ENCODE measurements at regions of chr14 and their contacts with region 1.

Region 1: GRCh38 chr14:73759714-73760597 is 45.8 kb upstream of the PNMA1 start:
- DNase-seq: peak; percentile 92
- H3K4me3 ChIP-seq: peak overlapping the region; percentile 67 to 72
- H3K27ac ChIP-seq: peak overlapping the region; percentile 85 to 96
- H3K4me1 ChIP-seq: peaks cover 46 to 61% of the 10 kb centered on the region in 2 experiments
- H3K27me3 ChIP-seq: no peaks in the 10 kb centered on the region
- CTCF ChIP-seq: no peak; the same call in 1 of the 2 replicates
- EP300 ChIP-seq: peak in 1 of 2 experiments; percentile 28; a peak in 1 of 4 replicates
- RAD21 ChIP-seq: no peak

Region 2: GRCh38 chr14:73568381-73568781 is 191.6 kb before region 1 on chr14:
- CTCF ChIA-PET with region 1: no interaction called
- POLR2A ChIA-PET with region 1: no interaction called
- DNase-seq: no peak
- H3K4me3 ChIP-seq: peak overlapping the region; percentile 56 to 70; a peak in 2 of 4 replicates
- H3K27ac ChIP-seq: peak overlapping the region; percentile 70 to 88; a peak in 3 of 4 replicates
- H3K4me1 ChIP-seq: peaks cover 5 to 12% of the 10 kb centered on the region in 2 experiments; a peak in 3 of 4 replicates
- H3K27me3 ChIP-seq: no peaks in the 10 kb centered on the region
- CTCF ChIP-seq: no peak
- EP300 ChIP-seq: no peak
- RAD21 ChIP-seq: no peak

Region 3: GRCh38 chr14:73728717-73729330 is 31.1 kb before region 1 on chr14:
- CTCF ChIA-PET with region 1: interaction called, 95 read pairs
- POLR2A ChIA-PET with region 1: no interaction called
- DNase-seq: peak; percentile 89
- H3K4me3 ChIP-seq: peak overlapping the region in 1 of 2 experiments; percentile 36; a peak in 1 of 4 replicates
- H3K27ac ChIP-seq: peak overlapping the region; percentile 13 to 53; a peak in 2 of 4 replicates
- H3K4me1 ChIP-seq: peaks cover under 1 to 20% of the 10 kb centered on the region in 2 experiments; a peak in 3 of 4 replicates
- H3K27me3 ChIP-seq: no peaks in the 10 kb centered on the region
- CTCF ChIP-seq: peak; percentile 85
- EP300 ChIP-seq: no peak
- RAD21 ChIP-seq: peak; percentile 95

Region 4: GRCh38 chr14:73771848-73772638 is 12.1 kb after region 1 on chr14:
- CTCF ChIA-PET with region 1: interaction called, 48 read pairs
- POLR2A ChIA-PET with region 1: interaction called, 3 read pairs
- DNase-seq: peak; percentile 79
- H3K4me3 ChIP-seq: no peak overlapping the region
- H3K27ac ChIP-seq: peak overlapping the region in 1 of 2 experiments; percentile 65; a peak in 2 of 4 replicates
- H3K4me1 ChIP-seq: peaks cover 21 to 22% of the 10 kb centered on the region in 2 experiments
- H3K27me3 ChIP-seq: no peaks in the 10 kb centered on the region
- CTCF ChIP-seq: no peak
- EP300 ChIP-seq: no peak
- RAD21 ChIP-seq: no peak

Region 5: GRCh38 chr14:73785873-73786695 is 26.1 kb after region 1 on chr14:
- CTCF ChIA-PET with region 1: interaction called, 24 read pairs
- POLR2A ChIA-PET with region 1: interaction called, 3 read pairs
- DNase-seq: peak; percentile 74
- H3K4me3 ChIP-seq: peak overlapping the region; percentile 80 to 88
- H3K27ac ChIP-seq: peak overlapping the region; percentile 72 to 87
- H3K4me1 ChIP-seq: peaks cover 20 to 31% of the 10 kb centered on the region in 2 experiments
- H3K27me3 ChIP-seq: no peaks in the 10 kb centered on the region
- CTCF ChIP-seq: no peak; the same call in 1 of the 2 replicates
- EP300 ChIP-seq: no peak
- RAD21 ChIP-seq: no peak

Region 6: DNA sequence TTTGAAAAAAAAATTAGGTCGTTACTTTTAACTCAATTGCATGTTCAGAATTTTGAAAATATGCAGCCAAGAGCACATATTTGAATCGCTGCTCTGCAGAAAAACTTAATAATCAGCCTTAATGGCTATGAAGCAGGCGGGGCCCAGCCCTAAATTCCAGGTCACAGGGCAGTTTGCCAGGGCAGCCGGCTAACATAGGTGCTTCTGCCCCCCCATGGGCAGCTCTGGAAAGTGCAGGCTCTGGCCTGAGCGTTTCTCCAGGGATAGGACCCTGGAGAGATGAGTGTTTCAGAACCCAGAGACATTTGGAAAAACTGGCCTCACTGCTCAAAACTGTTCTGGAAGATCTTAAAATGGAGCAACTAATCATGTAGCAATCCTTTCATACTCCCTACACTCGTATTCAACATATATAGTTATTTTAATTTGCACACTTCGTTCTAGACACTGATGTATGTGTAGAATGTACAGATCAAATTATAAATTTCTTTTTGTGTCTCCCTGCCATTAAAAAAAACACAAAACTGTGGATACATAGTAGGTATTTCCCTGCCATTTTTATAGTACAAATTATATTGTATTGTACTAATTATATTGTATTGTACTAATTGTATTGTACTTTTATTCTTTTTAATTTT is 65.7 kb after region 1 on chr14:
- CTCF ChIA-PET with region 1: interaction called, 25 read pairs
- POLR2A ChIA-PET with region 1: no interaction called
- DNase-seq: peak; percentile 90
- H3K4me3 ChIP-seq: peak overlapping the region in 1 of 2 experiments; percentile 27; a peak in 1 of 4 replicates
- H3K27ac ChIP-seq: no peak overlapping the region; a peak in 1 of 4 replicates
- H3K4me1 ChIP-seq: peaks cover 0 to 3% of the 10 kb centered on the region in 2 experiments; a peak in 1 of 4 replicates
- H3K27me3 ChIP-seq: no peaks in the 10 kb centered on the region
- CTCF ChIP-seq: peak; percentile 93
- EP300 ChIP-seq: no peak
- RAD21 ChIP-seq: peak; percentile 94

Region 7: GRCh38 chr14:73924337-73924736 is 164.4 kb after region 1 on chr14:
- CTCF ChIA-PET with region 1: no interaction called
- POLR2A ChIA-PET with region 1: no interaction called
- DNase-seq: no peak
- H3K4me3 ChIP-seq: no peak overlapping the region
- H3K27ac ChIP-seq: no peak overlapping the region
- H3K4me1 ChIP-seq: no peaks in the 10 kb centered on the region
- H3K27me3 ChIP-seq: no peaks in the 10 kb centered on the region
- CTCF ChIP-seq: no peak
- EP300 ChIP-seq: no peak
- RAD21 ChIP-seq: no peak